ENCODE measurements at regions of chr3 and their contacts with region 1.

Region 1: GRCh38 chr3:134485718-134486576 is at the starts of genes ANAPC13 and CEP63:
- DNase-seq: peak; percentile 97
- H3K4me3 Mint-ChIP-seq: peak within 1 kb of the TSS; percentile 87
- H3K27ac Mint-ChIP-seq: peak within 1 kb of the TSS; percentile 98
- H3K4me1 Mint-ChIP-seq: peaks cover 45% of the 10 kb centered on the region
- H3K27me3 Mint-ChIP-seq: no peaks in the 10 kb centered on the region
- total RNA-seq, gene ANAPC13: 42.6 to 44.7 TPM
- total RNA-seq, gene CEP63: 26.9 to 27.0 TPM

Region 2: DNA sequence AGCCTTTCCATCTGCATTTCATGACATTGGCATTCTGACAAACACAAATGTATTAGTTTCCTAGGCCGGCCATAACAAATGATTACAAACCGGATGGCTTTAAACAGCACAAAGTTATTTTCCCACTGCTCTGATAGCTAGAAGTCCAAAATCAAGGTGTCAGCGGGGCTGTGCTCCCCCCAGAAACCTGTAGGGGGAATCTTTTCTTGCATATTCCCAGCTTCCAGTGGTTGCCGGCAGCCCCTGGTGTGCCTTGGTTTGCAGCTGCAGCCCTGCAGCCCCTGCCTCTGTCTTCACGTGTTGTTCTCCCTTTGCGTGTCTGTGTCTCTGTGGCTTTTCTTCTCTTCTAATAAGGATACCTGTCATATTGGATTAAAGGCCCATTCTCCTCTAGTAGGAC is 991.5 kb before region 1 on chr3:
- CTCF ChIA-PET with region 1: no interaction called
- intact Hi-C with region 1: loop called (anchors 5 kb)
- DNase-seq: peak; percentile 35
- H3K4me3 Mint-ChIP-seq: no peak overlapping the region
- H3K27ac Mint-ChIP-seq: no peak overlapping the region
- H3K4me1 Mint-ChIP-seq: peaks cover 44% of the 10 kb centered on the region
- H3K27me3 Mint-ChIP-seq: no peaks in the 10 kb centered on the region

Region 3: GRCh38 chr3:133805527-133806475 is 680.1 kb before region 1 on chr3 and contains the start of gene SRPRB:
- CTCF ChIA-PET with region 1: no interaction called
- intact Hi-C with region 1: loop called (anchors 1 kb)
- DNase-seq: peak; percentile 98
- H3K4me3 Mint-ChIP-seq: peak within 1 kb of the TSS; percentile 93
- H3K27ac Mint-ChIP-seq: peak within 1 kb of the TSS; percentile 94
- H3K4me1 Mint-ChIP-seq: peaks cover 37% of the 10 kb centered on the region
- H3K27me3 Mint-ChIP-seq: no peaks in the 10 kb centered on the region
- total RNA-seq, gene SRPRB: 55.0 to 56.8 TPM

Region 4: GRCh38 chr3:134239538-134239937 is 246.4 kb before region 1 on chr3:
- CTCF ChIA-PET with region 1: no interaction called
- intact Hi-C with region 1: loop called (anchors 1 kb)
- DNase-seq: peak; percentile 45
- H3K4me3 Mint-ChIP-seq: peak overlapping the region; percentile 30
- H3K27ac Mint-ChIP-seq: peak overlapping the region; percentile 88
- H3K4me1 Mint-ChIP-seq: peaks cover 94% of the 10 kb centered on the region
- H3K27me3 Mint-ChIP-seq: no peaks in the 10 kb centered on the region

Region 5: GRCh38 chr3:134299185-134299887 is 186.6 kb before region 1 on chr3:
- CTCF ChIA-PET with region 1: interaction called, 8 read pairs
- intact Hi-C with region 1: loop called (anchors 1 kb)
- DNase-seq: no peak
- H3K4me3 Mint-ChIP-seq: no peak overlapping the region
- H3K27ac Mint-ChIP-seq: no peak overlapping the region
- H3K4me1 Mint-ChIP-seq: no peaks in the 10 kb centered on the region
- H3K27me3 Mint-ChIP-seq: peaks cover 11% of the 10 kb centered on the region

Region 6: GRCh38 chr3:134496471-134497071 is 10.6 kb after region 1 on chr3:
- CTCF ChIA-PET with region 1: interaction called, 4 read pairs
- intact Hi-C with region 1: loop called (anchors 1 kb)
- DNase-seq: no peak
- H3K4me3 Mint-ChIP-seq: no peak overlapping the region
- H3K27ac Mint-ChIP-seq: no peak overlapping the region
- H3K4me1 Mint-ChIP-seq: peaks cover 55% of the 10 kb centered on the region
- H3K27me3 Mint-ChIP-seq: no peaks in the 10 kb centered on the region